Psoas muscle (tissue), 8 donors: ENCODE measurements at regions of chr7 and their contacts with region 1.

Region 1: GRCh38 chr7:121547544-121548092 is 151.5 kb upstream of the FAM3C start:
- DNase-seq: no peak
- ATAC-seq: peak in 3 of 4 donors; percentile 69 to 85 (median 76)
- H3K4me3 ChIP-seq: no peak overlapping the region
- H3K27ac ChIP-seq: no peak overlapping the region
- H3K4me1 ChIP-seq: no peaks in the 10 kb centered on the region
- H3K27me3 ChIP-seq: peaks cover 0 to 2% (median 0%) of the 10 kb centered on the region in 3 donors
- CTCF ChIP-seq: peak; percentile 77

Region 2: GRCh38 chr7:121366852-121367431 is 180.7 kb before region 1 on chr7:
- intact Hi-C with region 1: loop called (anchors 1 to 2 kb)
- DNase-seq: no peak
- ATAC-seq: peak in 1 of 4 donors; percentile 47
- H3K4me3 ChIP-seq: no peak overlapping the region
- H3K27ac ChIP-seq: no peak overlapping the region
- H3K4me1 ChIP-seq: no peaks in the 10 kb centered on the region
- H3K27me3 ChIP-seq: no peaks in the 10 kb centered on the region
- CTCF ChIP-seq: peak; percentile 80

Region 3: GRCh38 chr7:121395961-121396757 is 151.5 kb before region 1 on chr7 and contains the start of gene FAM3C:
- intact Hi-C with region 1: loop called in 1 of 2 experiments (anchors 10 kb)
- DNase-seq: peak; percentile 95
- ATAC-seq: peak; percentile 99 to 100 (median 100)
- H3K4me3 ChIP-seq: peak within 1 kb of the TSS; percentile 84
- H3K27ac ChIP-seq: peak within 1 kb of the TSS; percentile 79
- H3K4me1 ChIP-seq: no peaks in the 10 kb centered on the region
- H3K27me3 ChIP-seq: no peaks in the 10 kb centered on the region
- CTCF ChIP-seq: peak; percentile 97
- total RNA-seq, gene FAM3C: 16.0 to 25.8 (median 18.1) TPM